ENCODE measurements at regions of chr6 and their contacts with region 1.

Region 1: GRCh38 chr6:32439602-32440214 is at the start of gene HLA-DRA:
- ATAC-seq: peak in 3 of 8 experiments; percentile 85 to 97 (median 96)
- H3K4me3 ChIP-seq: no peak within 1 kb of the TSS
- H3K27ac ChIP-seq: no peak within 1 kb of the TSS
- H3K4me1 ChIP-seq: no peaks in the 10 kb centered on the region
- total RNA-seq, gene HLA-DRA: 0.25 to 23.9 (median 0.40) TPM in 3 of 8 experiments, not detected in the others

Region 2: GRCh38 chr6:32692019-32692418 is 252.3 kb after region 1 on chr6:
- in situ Hi-C with region 1: loop called in 2 of 9 experiments (anchors 25 kb)
- ATAC-seq: no peak
- H3K4me3 ChIP-seq: no peak overlapping the region
- H3K27ac ChIP-seq: no peak overlapping the region
- H3K4me1 ChIP-seq: no peaks in the 10 kb centered on the region

Region 3: DNA sequence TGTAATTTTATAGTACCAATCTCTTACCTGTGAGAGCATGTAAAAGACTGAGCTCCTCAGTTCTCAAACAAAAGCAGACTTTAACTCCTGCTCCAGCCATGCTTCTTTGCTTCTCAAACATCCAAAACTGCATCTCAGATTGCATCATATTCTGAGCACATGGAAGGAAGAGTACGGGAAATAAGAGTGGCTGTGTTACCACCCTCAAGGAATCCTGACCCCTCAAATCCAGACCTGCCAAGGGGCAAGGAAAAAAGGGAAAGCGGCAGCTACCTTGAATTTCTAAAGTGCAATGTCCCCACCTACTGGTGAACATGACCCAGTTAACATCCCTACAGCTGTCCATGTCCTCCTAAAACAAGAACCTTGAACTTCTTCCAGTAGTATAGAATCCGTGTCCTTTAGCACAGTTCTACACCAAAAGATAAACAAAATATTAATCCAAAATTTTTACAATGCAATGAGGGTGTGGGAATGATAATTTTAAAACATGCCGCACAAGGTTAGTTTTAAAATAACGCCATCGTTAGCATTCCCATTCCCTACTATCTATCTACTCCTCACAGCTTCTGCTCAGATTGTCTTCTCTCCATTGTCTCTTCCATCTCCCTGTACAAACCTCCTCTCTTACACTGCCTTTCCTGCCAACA is 260.8 kb after region 1 on chr6:
- in situ Hi-C with region 1: loop called in 3 of 9 experiments (anchors 25 kb)
- ATAC-seq: peak; percentile 81 to 93 (median 89)
- H3K4me3 ChIP-seq: no peak overlapping the region
- H3K27ac ChIP-seq: no peak overlapping the region
- H3K4me1 ChIP-seq: no peaks in the 10 kb centered on the region

Region 4: GRCh38 chr6:32796848-32797776 is 357.4 kb after region 1 on chr6:
- in situ Hi-C with region 1: loop called in 1 of 9 experiments (anchors 25 kb)
- ATAC-seq: peak; percentile 60 to 95 (median 78)
- H3K4me3 ChIP-seq: peak overlapping the region in 1 of 5 donors; percentile 9
- H3K27ac ChIP-seq: no peak overlapping the region
- H3K4me1 ChIP-seq: no peaks in the 10 kb centered on the region

Region 5: DNA sequence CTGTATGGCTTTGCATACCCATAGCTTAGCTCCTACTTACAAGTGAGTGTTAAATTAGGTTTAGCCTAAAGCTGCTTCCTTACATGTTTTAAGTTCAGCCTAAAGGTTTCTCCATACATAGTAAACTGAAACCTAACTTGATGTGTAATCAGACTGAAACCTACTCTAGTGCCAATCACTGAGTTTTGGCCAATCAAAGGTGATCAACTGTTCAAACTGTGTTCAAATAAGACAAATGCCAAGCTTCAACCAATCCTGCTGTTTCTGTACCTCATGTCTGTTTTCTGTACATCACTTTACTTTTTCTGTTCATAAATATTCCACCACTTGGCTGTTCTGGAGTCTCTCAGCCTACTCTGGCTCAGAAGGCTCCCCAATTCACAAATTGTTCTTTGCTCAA is 549.7 kb after region 1 on chr6:
- in situ Hi-C with region 1: no loop called
- ATAC-seq: no peak
- H3K4me3 ChIP-seq: no peak overlapping the region
- H3K27ac ChIP-seq: no peak overlapping the region
- H3K4me1 ChIP-seq: no peaks in the 10 kb centered on the region